ENCODE measurements at regions of chr13 and their contacts with region 1.

Region 1: GRCh38 chr13:48769107-48769704 is 115.5 kb downstream of the CYSLTR2 start:
- DNase-seq: peak; percentile 90
- ATAC-seq: peak; percentile 76
- H3K4me3 ChIP-seq: no peak overlapping the region
- H3K27ac ChIP-seq: no peak overlapping the region
- H3K4me1 ChIP-seq: 0 out of 2 replicates have a peak, but pooled peaks cover 3% of the 10 kb centered on the region
- H3K27me3 ChIP-seq: no peaks in the 10 kb centered on the region
- CTCF ChIP-seq: peak; percentile 98

Region 2: DNA sequence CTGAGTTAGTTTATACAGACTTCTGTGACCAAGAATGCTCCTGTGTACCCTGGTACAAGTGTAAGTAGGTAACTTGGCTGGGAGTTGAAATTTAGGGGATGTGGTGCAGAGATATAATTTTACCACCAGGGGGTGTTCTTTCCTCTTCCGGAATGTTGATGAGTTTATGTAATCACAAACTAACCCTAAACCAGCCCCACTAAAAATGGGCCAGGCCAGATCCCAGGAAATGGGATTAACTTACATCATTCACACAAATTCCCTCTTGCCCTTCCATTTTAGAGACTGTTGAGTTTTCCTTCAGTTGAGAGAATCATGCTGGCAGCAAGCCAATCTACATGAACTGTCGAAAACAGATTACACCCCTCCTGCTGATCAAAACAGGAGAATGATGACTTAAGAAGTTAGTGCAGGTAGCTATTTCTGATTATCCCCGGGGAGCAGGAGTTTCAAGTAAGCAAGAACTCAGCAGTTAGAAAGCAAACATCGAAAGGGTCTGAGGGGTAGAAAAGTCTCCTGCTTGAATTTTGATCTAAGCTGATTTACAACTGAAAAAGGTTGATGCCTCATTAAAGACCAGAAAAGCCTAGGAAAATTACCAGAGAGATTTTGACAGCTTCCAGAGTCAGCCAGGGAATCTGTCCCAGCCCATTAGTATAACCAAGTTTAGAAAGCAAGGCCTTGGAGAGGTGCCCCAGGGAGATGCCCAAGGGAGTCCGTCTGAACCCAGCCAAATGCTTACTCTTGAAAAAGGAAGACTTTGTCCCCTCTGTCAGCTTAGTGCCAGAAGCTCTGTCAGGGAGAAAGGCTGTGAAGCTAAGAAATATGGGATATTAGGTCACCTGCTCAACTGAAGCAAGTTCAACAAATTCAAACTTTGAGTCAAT is 642.0 kb before region 1 on chr13:
- CTCF ChIA-PET with region 1: interaction called, 3 read pairs
- POLR2A ChIA-PET with region 1: no interaction called
- intact Hi-C with region 1: loop called (anchors 5 kb)
- DNase-seq: peak; percentile 66
- ATAC-seq: peak; percentile 73
- H3K4me3 ChIP-seq: no peak overlapping the region
- H3K27ac ChIP-seq: no peak overlapping the region
- H3K4me1 ChIP-seq: no peaks in the 10 kb centered on the region
- H3K27me3 ChIP-seq: no peaks in the 10 kb centered on the region
- CTCF ChIP-seq: peak; percentile 68

Region 3: DNA sequence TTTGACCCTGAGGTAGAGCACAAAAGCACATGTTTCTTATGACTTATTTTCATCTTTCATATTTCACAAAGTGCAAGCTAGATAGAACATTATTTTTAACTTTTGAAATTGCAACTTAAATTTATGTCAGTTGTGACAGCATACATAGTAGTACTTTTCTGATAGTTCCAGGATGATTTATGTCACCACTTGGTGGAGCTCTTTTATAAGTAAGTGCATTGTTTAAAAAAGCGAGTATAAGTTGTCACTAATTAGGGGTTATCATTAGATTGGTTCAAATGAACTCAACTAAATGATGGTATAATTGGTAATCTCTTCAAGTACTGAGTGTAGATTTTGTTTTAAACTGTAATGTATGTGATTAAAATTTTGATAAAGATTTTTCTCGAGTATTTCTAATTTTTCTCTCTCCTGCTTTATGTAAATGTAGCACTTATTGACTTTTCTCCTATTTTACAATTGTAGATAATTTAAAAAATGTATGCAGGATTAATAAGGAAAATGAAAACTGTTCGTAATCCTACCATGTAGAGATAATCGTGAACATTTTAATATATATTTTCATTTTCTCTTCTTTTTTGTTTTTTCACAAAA is 434.6 kb before region 1 on chr13:
- CTCF ChIA-PET with region 1: no interaction called
- POLR2A ChIA-PET with region 1: no interaction called
- intact Hi-C with region 1: loop called (anchors 1 kb)
- DNase-seq: peak; percentile 49
- ATAC-seq: peak; percentile 74
- H3K4me3 ChIP-seq: no peak overlapping the region
- H3K27ac ChIP-seq: peak overlapping the region; percentile 53
- H3K4me1 ChIP-seq: peaks cover 18% of the 10 kb centered on the region
- H3K27me3 ChIP-seq: no peaks in the 10 kb centered on the region
- CTCF ChIP-seq: peak; percentile 87

Region 4: DNA sequence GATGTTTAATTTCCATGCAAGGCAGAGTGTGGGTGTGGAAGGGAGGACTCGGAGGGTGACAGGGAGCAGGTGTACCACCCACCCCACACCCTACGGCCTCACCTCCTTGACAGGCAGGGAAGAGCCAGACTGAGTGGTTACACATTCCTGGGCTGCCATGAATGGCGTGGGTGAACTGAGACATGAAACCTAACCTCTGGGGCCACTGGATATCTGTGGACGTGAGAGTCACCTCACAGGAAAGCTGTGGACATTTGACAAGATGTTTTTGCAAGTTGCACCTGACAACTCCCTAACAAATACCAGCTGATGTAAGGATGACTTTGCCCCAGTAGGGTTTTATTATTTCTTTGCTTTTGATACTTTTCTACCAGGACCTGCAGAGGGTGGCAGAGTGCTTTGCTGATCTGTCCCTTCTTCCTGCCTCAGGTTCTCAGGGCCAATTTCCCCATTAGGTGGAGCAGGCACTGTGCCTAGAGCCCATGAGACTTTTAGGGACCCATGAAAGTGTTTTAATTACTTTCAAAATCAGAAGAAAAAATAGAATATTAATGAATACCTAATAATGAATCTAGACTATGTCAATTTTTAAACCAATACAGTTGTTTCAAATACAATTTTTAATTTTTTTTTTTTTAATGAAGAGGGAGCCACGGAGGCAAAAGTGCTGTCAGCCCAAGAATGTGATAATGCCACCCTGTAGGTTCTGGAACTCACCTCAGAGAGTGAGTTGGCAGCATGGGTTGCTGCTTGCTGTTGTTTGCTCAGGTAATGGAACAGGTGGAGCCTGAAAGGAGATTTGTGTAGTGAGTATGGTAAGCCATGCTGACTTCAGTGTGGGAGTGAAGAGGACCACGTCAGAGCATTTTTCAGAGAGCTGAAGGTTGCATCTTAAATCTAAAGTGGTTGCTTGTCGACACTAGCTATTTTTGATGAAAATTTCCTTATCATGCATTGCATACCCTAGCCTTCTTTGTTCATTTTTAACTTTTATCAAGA is 173.5 kb before region 1 on chr13:
- CTCF ChIA-PET with region 1: interaction called, 4 read pairs
- POLR2A ChIA-PET with region 1: no interaction called
- intact Hi-C with region 1: loop called (anchors 1 kb)
- DNase-seq: peak; percentile 65
- ATAC-seq: peak; percentile 86
- H3K4me3 ChIP-seq: no peak overlapping the region
- H3K27ac ChIP-seq: no peak overlapping the region
- H3K4me1 ChIP-seq: peaks cover 8% of the 10 kb centered on the region
- H3K27me3 ChIP-seq: no peaks in the 10 kb centered on the region
- CTCF ChIP-seq: peak; percentile 84

Region 5: DNA sequence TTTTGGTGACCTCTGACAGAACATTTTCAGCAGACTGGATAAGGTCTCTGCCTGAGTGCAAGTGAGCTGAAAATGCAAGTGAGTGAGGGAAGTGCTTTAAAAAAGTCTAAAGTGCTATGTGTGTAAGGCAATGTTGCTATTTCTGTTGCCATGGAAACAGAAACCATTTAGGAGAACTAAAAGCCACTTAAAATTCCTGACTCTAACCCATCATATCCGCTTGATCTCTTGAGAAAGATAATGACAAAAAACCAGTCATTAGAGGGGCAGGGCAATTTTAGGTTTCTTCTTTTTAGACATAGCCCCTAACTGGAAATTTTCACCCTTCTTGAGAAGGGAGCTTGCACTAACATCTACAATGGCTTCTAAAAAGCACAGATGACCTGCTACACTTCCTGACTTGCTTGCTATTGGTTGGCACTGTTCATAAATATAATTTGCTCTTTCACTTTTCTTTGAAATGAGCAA is 115.7 kb before region 1 on chr13 and contains the start of gene CYSLTR2:
- CTCF ChIA-PET with region 1: no interaction called
- POLR2A ChIA-PET with region 1: no interaction called
- intact Hi-C with region 1: loop called (anchors 2 kb)
- DNase-seq: no peak
- ATAC-seq: no peak
- H3K4me3 ChIP-seq: no peak within 1 kb of the TSS
- H3K27ac ChIP-seq: no peak within 1 kb of the TSS
- H3K4me1 ChIP-seq: peaks cover 17% of the 10 kb centered on the region
- H3K27me3 ChIP-seq: no peaks in the 10 kb centered on the region
- CTCF ChIP-seq: no peak
- total RNA-seq, gene CYSLTR2: not detected in 2 replicates

Region 6: GRCh38 chr13:48749699-48750473 is 19.3 kb before region 1 on chr13:
- CTCF ChIA-PET with region 1: no interaction called
- POLR2A ChIA-PET with region 1: no interaction called
- intact Hi-C with region 1: loop called (anchors 1 kb)
- DNase-seq: peak; percentile 98
- ATAC-seq: peak; percentile 98
- H3K4me3 ChIP-seq: peak overlapping the region; percentile 18; the same call in 1 of the 2 replicates
- H3K27ac ChIP-seq: peak overlapping the region; percentile 96
- H3K4me1 ChIP-seq: peaks cover 24% of the 10 kb centered on the region
- H3K27me3 ChIP-seq: no peaks in the 10 kb centered on the region
- CTCF ChIP-seq: peak; percentile 57

Measured in PC-3 (cell line).